K562 (cell line): ENCODE measurements at regions of chr12 and their contacts with region 1.

Region 1: DNA sequence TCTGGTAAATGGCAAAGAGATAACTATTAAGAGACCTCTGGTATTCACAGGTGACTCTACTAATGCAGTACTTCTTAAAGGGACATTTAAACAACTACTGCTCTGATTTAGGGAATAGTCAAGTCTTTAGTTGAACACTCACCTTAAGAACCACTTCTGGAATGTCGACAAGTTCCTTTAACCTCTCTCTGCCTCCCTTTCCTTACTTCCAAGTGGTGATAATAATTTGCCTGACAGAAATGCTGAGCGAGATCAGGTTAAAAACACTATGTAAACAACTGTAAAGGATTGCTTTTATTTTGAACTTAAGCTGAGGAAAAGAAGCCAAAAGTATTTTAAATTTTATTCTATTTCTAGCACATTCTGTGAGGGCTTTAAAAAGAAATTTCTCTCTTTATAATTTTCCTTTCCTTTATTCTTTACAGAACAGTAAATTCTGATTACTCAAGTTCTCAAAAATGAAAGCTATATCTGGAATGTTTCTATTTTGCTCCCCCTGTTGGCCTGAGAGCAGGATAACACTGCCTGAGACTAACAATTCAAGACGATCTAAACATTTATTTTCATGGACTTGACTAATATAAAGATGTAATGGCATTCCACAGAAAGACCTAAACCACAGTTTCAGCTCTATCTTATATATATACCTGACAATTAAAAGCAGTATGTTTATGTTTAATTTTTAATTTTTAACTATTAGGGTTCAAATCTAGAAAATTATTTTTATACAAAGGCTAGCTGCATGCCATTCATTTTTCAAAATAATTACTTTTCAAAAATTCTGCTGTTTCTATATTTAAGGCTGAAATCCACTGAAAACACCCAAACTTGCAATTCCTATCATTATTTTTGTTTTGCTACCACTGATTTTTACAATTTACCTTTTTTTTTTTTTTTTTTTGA is 29.2 kb downstream of the ZCCHC8 start:
- DNase-seq: peak; percentile 35 to 71 (median 49)
- ATAC-seq: peak; percentile 75
- H3K4me3 ChIP-seq: no peak overlapping the region
- H3K27ac ChIP-seq: peak overlapping the region; percentile 8; the same call in 1 of the 3 replicates
- H3K4me1 ChIP-seq: peaks cover 0 to 5% of the 10 kb centered on the region in 2 experiments; a peak in 1 of 5 replicates
- H3K27me3 ChIP-seq: no peaks in the 10 kb centered on the region
- CTCF ChIP-seq: peak; percentile 57 to 79 (median 59); a peak in 5 of 6 replicates
- EP300 ChIP-seq: no peak
- POLR2A ChIP-seq: no peak
- RAD21 ChIP-seq: peak; percentile 87 to 89

Region 2: DNA sequence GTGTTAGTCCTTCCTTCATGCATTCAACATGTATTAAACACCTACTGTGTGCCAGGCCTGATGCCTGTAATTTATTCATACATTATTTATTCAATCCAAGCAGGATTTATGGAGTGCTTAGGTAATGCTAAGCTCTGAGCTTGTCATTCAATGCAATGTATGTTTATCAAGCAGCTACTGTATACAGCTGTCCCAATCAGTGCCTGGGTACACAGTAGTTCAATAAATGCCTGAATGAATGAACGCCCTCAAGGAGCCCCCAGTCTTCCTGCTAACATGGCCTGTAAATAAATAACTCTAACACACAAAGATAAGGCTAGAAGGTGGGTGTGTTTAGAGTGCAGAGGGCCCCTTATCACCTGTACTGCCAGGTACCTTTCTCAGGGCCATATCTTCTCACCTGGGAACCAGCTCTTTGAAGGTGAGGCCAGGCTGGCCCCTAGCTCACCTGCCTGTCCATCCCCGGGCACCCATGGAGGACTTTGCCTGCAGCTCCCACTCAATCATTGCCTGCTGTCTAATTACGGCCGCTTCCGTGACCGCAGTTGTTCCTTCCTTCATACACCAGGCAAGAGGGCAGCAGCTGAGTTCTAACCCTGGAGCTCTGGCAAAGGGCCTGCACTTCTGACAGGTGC is 870.8 kb before region 1 on chr12:
- CTCF ChIA-PET with region 1: no interaction called
- POLR2A ChIA-PET with region 1: no interaction called
- in situ Hi-C with region 1: no loop called
- intact Hi-C with region 1: no loop called
- DNase-seq: no peak
- ATAC-seq: no peak
- H3K4me3 ChIP-seq: no peak overlapping the region
- H3K27ac ChIP-seq: no peak overlapping the region
- H3K4me1 ChIP-seq: peaks cover 0 to 6% of the 10 kb centered on the region in 2 experiments; a peak in 2 of 5 replicates
- H3K27me3 ChIP-seq: no peaks in the 10 kb centered on the region
- CTCF ChIP-seq: no peak
- EP300 ChIP-seq: no peak
- POLR2A ChIP-seq: no peak
- RAD21 ChIP-seq: no peak

Region 3: DNA sequence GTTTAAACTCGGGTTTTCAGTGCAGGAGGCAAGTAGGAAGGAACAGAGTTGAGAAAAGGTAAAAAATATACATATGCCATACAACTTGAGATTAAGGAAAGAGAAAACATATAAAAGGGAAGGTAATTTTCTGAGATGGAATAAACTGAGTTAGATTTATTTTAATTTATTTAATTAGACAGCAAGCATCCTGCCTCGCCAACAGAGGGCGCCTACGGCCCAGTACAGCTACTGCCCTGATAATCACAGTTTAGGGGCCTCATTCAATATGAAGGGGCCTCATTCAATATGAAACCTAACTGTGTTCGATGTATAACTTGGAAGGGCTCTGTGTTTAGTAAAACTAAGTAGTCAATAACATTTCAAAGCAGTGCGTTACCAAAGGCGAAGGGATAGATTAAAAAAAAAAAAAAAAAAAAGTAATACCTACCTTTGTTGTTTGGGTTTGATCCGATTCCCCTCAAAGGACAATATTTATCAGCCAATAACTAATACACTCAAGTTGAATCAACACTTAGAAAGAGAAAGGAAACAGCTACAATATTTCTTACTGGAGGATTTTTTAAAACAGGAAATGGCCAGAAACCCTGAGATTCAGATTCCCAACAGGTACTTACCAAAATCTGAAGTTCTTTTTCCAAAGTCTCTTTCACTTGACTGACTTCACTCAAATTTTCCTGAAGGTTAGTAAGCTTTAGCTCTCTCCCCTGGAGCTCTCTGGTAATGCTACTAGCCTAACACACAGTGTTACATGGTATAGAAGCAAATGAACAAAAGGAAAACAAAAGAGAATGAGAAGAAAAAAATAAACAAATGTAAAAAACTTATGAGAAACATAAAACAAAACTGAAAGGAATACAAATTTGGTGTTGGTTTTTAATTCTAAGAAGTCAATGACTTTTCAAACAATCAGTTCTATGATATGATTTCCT is 135.3 kb before region 1 on chr12:
- CTCF ChIA-PET with region 1: interaction called, 13 read pairs
- POLR2A ChIA-PET with region 1: interaction called, 3 read pairs
- in situ Hi-C with region 1: no loop called
- intact Hi-C with region 1: loop called (anchors 2 kb)
- DNase-seq: peak; percentile 33 to 62 (median 50)
- ATAC-seq: peak; percentile 20; the same call in 1 of the 3 replicates
- H3K4me3 ChIP-seq: no peak overlapping the region
- H3K27ac ChIP-seq: peak overlapping the region; percentile 32; the same call in 1 of the 3 replicates
- H3K4me1 ChIP-seq: peaks cover 4 to 19% of the 10 kb centered on the region in 2 experiments; a peak in 4 of 5 replicates
- H3K27me3 ChIP-seq: no peaks in the 10 kb centered on the region
- CTCF ChIP-seq: peak; percentile 81 to 92 (median 82)
- EP300 ChIP-seq: no peak
- POLR2A ChIP-seq: no peak
- RAD21 ChIP-seq: peak; percentile 49 to 70

Region 4: GRCh38 chr12:122486805-122487426 is 15.3 kb after region 1 on chr12:
- CTCF ChIA-PET with region 1: no interaction called
- POLR2A ChIA-PET with region 1: interaction called, 43 read pairs
- in situ Hi-C with region 1: no loop called
- intact Hi-C with region 1: no loop called
- DNase-seq: no peak
- ATAC-seq: no peak
- H3K4me3 ChIP-seq: no peak overlapping the region
- H3K27ac ChIP-seq: no peak overlapping the region
- H3K4me1 ChIP-seq: peaks cover 0 to 6% of the 10 kb centered on the region in 2 experiments; a peak in 2 of 5 replicates
- H3K27me3 ChIP-seq: no peaks in the 10 kb centered on the region
- CTCF ChIP-seq: no peak
- EP300 ChIP-seq: no peak
- POLR2A ChIP-seq: no peak
- RAD21 ChIP-seq: no peak

Region 5: GRCh38 chr12:122533856-122534255 is 62.3 kb after region 1 on chr12:
- CTCF ChIA-PET with region 1: no interaction called
- POLR2A ChIA-PET with region 1: no interaction called
- in situ Hi-C with region 1: no loop called
- intact Hi-C with region 1: no loop called
- DNase-seq: no peak
- ATAC-seq: no peak
- H3K4me3 ChIP-seq: no peak overlapping the region
- H3K27ac ChIP-seq: no peak overlapping the region
- H3K4me1 ChIP-seq: no peaks in the 10 kb centered on the region
- H3K27me3 ChIP-seq: no peaks in the 10 kb centered on the region
- CTCF ChIP-seq: no peak
- EP300 ChIP-seq: no peak
- POLR2A ChIP-seq: no peak
- RAD21 ChIP-seq: no peak

Region 6: DNA sequence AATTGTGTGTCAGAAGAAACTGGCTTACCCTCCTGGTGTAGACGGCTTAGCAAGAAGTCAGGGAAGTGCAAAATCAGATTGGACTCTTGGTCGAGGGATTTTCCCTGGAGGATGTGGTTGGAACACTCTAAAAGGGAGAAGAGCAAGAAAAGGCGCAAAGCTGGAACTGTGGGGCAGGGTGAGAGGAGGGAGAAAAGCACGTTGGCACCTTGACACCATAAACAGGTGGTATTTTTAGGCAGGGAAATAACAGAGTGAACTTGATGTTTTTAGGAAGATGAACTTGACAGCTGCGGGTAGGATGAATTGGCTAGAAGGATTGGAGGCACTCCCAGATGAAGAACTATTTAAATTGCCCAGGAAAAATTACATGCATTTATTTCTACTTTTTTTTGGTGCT is 163.9 kb after region 1 on chr12:
- CTCF ChIA-PET with region 1: no interaction called
- POLR2A ChIA-PET with region 1: no interaction called
- in situ Hi-C with region 1: no loop called
- intact Hi-C with region 1: no loop called
- DNase-seq: no peak
- ATAC-seq: no peak
- H3K4me3 ChIP-seq: no peak overlapping the region
- H3K27ac ChIP-seq: no peak overlapping the region
- H3K4me1 ChIP-seq: no peaks in the 10 kb centered on the region
- H3K27me3 ChIP-seq: no peaks in the 10 kb centered on the region
- CTCF ChIP-seq: no peak
- EP300 ChIP-seq: no peak
- POLR2A ChIP-seq: no peak
- RAD21 ChIP-seq: no peak